A673 (cell line): ENCODE measurements at regions of chr10 and their contacts with region 1.

Region 1: GRCh38 chr10:93859049-93859655 is 34.6 kb upstream of the SLC35G1 start:
- DNase-seq: peak; percentile 33
- H3K4me3 ChIP-seq: no peak overlapping the region
- H3K27ac ChIP-seq: no peak overlapping the region
- H3K4me1 ChIP-seq: peaks cover 7% of the 10 kb centered on the region
- H3K27me3 ChIP-seq: no peaks in the 10 kb centered on the region
- CTCF ChIP-seq: peak; percentile 70

Region 2: GRCh38 chr10:93554760-93555432 is 304.3 kb before region 1 on chr10:
- CTCF ChIA-PET with region 1: interaction called, 5 read pairs
- POLR2A ChIA-PET with region 1: no interaction called
- intact Hi-C with region 1: loop called (anchors 2 kb)
- DNase-seq: peak; percentile 76
- H3K4me3 ChIP-seq: no peak overlapping the region
- H3K27ac ChIP-seq: no peak overlapping the region
- H3K4me1 ChIP-seq: no peaks in the 10 kb centered on the region
- H3K27me3 ChIP-seq: no peaks in the 10 kb centered on the region
- CTCF ChIP-seq: peak; percentile 79

Region 3: DNA sequence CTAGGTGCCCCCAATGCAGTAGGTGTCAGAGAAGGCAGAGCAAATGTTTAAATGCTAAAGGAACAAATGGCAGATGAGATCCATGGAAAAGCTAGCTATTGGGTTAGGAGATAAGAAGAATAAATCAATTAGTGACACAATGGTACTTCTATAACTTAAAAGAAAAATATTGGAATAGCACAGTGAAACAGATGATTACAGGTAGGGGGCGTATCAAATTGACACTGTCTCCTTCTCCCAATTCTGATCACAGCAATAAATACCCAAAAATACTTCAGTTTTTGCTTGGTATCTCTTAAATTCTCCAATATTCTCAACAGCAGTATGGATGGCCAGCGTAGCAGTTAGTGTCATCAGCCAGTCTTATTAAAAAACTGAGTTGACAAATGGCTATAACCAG is 161.9 kb before region 1 on chr10:
- CTCF ChIA-PET with region 1: no interaction called
- POLR2A ChIA-PET with region 1: no interaction called
- intact Hi-C with region 1: loop called (anchors 5 kb)
- DNase-seq: no peak
- H3K4me3 ChIP-seq: no peak overlapping the region
- H3K27ac ChIP-seq: no peak overlapping the region
- H3K4me1 ChIP-seq: no peaks in the 10 kb centered on the region
- H3K27me3 ChIP-seq: no peaks in the 10 kb centered on the region
- CTCF ChIP-seq: no peak; the same call in 1 of the 2 replicates